ENCODE measurements at regions of chr6 and their contacts with region 1.

Region 1: GRCh38 chr6:113858480-113859348 is 1.6 kb downstream of the MARCKS start:
- DNase-seq: peak; percentile 91
- ATAC-seq: peak; percentile 90

Region 2: DNA sequence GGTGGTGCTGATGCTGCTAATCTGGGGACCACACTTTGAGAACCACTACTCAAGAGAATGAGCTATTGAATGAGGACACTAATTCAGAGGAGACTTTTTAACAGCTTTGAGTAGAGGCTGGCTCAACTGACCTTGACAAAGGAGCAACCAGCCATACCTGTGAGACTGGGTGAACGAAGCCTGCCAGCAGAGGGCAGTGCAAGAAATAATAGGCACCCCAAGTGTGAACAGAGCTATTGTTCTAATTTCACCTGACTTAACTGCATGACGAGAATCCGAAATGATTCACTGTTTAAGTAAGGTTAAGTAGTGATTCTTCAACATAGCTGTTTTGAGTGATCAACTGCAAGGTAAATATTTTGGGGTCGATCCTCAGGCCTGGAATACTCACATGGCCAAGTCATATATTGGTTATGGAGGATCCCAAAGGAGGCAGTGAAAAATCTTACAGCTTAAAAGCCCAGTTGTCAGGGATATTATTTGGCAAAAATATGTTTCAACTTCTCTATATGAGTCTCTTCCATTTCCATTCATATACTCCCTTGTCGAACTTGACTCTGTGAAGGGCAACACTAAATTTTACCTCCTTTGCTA is 552.1 kb before region 1 on chr6:
- intact Hi-C with region 1: loop called (anchors 5 kb)
- DNase-seq: peak; percentile 79
- ATAC-seq: peak; percentile 80

Region 3: GRCh38 chr6:113414511-113414910 is 444.2 kb before region 1 on chr6:
- intact Hi-C with region 1: loop called (anchors 10 kb)
- DNase-seq: no peak
- ATAC-seq: peak; percentile 79

Region 4: DNA sequence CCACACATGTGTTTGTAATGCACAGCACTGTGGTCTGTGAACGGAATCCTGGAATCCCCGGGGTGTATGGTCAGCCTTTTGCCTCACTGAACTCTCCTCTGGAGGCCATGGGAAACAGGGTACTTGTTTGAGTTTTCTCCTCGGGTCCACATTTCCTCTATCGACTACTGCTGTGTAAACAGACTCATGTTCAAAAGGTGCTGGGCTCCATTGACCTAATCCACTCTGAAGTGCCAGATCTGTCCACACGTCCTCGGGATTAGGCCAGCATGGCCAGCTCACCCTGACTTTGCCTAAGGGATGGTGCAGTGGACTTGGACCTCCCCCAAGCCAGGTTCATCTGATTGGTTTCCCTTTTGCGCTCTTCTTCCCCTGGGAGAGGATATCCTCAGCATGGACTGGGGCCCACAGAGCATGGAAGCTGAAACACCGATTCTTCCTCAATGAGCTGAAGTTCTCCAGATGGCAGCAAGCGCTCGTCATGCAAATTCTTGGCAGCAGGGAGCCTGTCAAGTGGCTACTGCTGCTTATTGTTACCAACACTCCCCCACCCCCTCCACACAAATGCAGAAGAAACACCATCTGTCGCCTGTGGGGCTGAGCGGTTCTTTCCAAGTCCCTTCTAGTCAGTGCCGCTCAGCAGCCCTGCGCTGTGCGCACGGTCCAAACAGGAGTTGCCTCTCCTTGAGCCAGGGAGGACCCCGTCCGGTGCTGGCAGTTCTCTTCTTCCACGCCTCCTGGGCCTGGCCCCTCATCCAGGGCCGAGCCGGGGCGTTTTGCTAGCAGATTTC is 294.1 kb before region 1 on chr6:
- intact Hi-C with region 1: loop called (anchors 10 kb)
- DNase-seq: peak; percentile 88
- ATAC-seq: peak; percentile 98

Region 5: GRCh38 chr6:113903666-113904330 is 45.1 kb after region 1 on chr6:
- intact Hi-C with region 1: no loop called
- DNase-seq: peak; percentile 54
- ATAC-seq: peak; percentile 77